HCT116 (cell line): ENCODE measurements at regions of chr6 and their contacts with region 1.

Region 1: DNA sequence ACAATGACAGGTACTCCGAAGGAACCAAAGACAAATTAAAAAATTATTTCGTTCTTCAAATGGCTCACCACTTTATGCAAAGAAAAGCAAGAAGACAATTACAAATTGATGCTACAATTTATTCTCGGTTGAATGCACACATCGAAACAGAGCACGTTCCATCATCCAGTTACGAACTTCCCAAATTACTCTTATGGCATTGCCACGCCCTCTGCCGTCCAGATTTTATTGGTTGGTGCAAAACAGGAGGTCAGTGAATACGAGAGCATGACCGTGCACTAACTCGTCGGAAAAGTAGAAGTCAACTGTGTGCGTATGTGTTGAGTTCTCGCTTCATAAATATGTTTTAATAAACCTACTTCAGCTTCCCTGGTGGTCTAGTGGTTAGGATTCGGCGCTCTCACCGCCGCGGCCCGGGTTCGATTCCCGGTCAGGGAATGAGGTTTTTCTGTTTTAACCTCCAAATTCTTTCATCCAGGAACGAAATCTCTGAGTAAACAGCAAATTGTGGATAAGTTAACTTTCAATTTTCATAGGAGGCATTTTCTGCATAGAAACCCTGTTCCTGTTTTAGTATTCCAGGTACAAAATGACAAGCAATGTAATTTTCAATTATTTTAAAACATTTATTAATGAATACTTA is 23.2 kb downstream of the ZNF311 start:
- DNase-seq: peak; percentile 91
- ATAC-seq: peak; percentile 35
- H3K4me3 ChIP-seq: peak overlapping the region; percentile 31 to 56
- H3K27ac ChIP-seq: peak overlapping the region; percentile 24; the same call in 1 of the 2 replicates
- H3K4me1 ChIP-seq: peaks cover 35 to 71% of the 10 kb centered on the region in 2 experiments
- H3K27me3 ChIP-seq: no peaks in the 10 kb centered on the region
- CTCF ChIP-seq: no peak
- POLR2A ChIP-seq: no peak
- RAD21 ChIP-seq: peak; percentile 45; the same call in 1 of the 2 replicates

Region 2: GRCh38 chr6:28725890-28726348 is 256.0 kb before region 1 on chr6:
- CTCF ChIA-PET with region 1: no interaction called
- POLR2A ChIA-PET with region 1: no interaction called
- RAD21 ChIA-PET with region 1: no interaction called
- intact Hi-C with region 1: loop called (anchors 5 kb)
- DNase-seq: no peak
- ATAC-seq: peak; percentile 71
- H3K4me3 ChIP-seq: peak overlapping the region; percentile 28 to 36
- H3K27ac ChIP-seq: no peak overlapping the region
- H3K4me1 ChIP-seq: peaks cover 15 to 31% of the 10 kb centered on the region in 2 experiments; a peak in 3 of 4 replicates
- H3K27me3 ChIP-seq: no peaks in the 10 kb centered on the region
- CTCF ChIP-seq: no peak
- POLR2A ChIP-seq: no peak
- RAD21 ChIP-seq: no peak

Region 3: DNA sequence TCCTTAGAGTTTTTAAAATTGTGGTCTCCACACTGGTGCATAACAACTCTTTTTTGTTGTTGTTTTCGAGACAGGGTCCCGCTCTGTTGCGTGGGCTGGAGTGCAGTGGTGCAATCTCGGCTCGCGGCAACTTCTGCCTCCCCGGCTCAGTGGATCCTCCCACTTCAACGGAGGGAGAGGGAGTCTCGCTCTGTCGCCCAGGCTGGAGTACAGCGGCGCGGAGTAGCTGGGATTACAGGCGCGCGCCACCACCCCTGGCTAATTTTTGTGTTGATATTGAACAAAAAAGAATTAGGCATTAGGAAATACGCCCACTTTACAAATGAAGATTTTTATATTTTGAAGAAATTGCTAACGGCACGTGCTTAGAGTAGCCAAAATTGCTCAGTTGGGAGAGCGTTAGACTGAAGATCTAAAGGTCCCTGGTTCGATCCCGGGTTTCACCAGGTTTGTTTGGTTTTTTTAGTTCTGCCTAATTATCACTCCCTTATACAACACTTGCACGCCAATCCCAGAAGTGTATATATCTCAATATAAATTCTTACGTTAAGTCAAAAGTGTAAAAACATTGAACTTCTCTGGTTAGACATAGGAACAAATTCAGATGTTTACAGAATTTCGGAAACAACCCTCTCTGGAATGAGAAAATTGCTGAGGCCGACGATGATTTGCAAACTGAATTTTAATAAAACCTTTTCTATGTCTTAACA is 217.8 kb before region 1 on chr6:
- CTCF ChIA-PET with region 1: no interaction called
- POLR2A ChIA-PET with region 1: no interaction called
- RAD21 ChIA-PET with region 1: no interaction called
- intact Hi-C with region 1: no loop called
- DNase-seq: no peak
- ATAC-seq: peak; percentile 30
- H3K4me3 ChIP-seq: no peak overlapping the region
- H3K27ac ChIP-seq: no peak overlapping the region
- H3K4me1 ChIP-seq: peaks cover 0 to 2% of the 10 kb centered on the region in 2 experiments; a peak in 2 of 4 replicates
- H3K27me3 ChIP-seq: no peaks in the 10 kb centered on the region
- CTCF ChIP-seq: no peak
- POLR2A ChIP-seq: no peak
- RAD21 ChIP-seq: no peak

Region 4: DNA sequence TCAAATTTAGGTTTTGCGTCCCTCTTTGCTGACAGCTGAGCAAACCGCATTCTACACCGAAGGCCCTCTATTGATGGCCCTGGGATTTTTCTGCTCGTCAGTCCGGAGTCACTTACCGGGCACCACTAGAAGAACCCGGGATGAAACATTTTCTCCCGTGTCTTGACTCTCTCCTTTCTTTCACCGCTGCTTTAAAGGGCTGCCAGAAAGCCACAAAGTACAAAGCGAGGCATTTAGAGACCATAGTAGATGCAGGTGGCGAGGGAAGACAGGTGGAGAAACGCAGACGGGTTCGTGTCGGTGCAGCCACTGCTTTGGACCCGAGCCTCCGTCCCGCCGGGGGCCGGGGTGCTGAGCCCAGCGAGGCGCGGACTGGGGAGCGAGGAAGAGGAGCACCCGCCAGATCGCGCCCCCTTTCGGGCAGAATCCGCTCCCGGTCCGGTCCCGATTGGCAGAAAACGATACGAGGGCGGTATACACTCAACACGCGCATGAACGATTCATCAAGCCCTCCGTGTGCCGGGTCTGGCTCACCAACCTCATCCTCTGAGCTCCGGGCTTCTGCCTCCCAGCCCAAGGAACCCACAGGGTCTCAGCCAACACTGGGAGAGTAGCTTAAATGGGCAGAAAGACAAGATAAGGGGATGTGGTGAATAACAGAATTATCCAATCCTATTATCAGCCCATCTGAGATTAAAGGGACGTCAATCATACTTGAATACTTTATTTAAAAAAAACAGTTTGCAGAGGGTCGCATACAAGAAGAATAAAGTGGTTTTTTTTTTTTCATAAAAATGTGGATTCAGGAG is 143.1 kb before region 1 on chr6:
- CTCF ChIA-PET with region 1: interaction called, 6 read pairs
- POLR2A ChIA-PET with region 1: interaction called, 3 read pairs
- RAD21 ChIA-PET with region 1: interaction called in 1 of 2 experiments, 3 read pairs
- intact Hi-C with region 1: loop called (anchors 2 kb)
- DNase-seq: peak; percentile 75
- ATAC-seq: peak; percentile 84
- H3K4me3 ChIP-seq: peak overlapping the region; percentile 55 to 67
- H3K27ac ChIP-seq: peak overlapping the region; percentile 67
- H3K4me1 ChIP-seq: peaks cover 3 to 19% of the 10 kb centered on the region in 2 experiments; a peak in 3 of 4 replicates
- H3K27me3 ChIP-seq: no peaks in the 10 kb centered on the region
- CTCF ChIP-seq: peak; percentile 46 to 67 (median 65); a peak in 5 of 6 replicates
- POLR2A ChIP-seq: peak; percentile 45
- RAD21 ChIP-seq: peak; percentile 55

Region 5: DNA sequence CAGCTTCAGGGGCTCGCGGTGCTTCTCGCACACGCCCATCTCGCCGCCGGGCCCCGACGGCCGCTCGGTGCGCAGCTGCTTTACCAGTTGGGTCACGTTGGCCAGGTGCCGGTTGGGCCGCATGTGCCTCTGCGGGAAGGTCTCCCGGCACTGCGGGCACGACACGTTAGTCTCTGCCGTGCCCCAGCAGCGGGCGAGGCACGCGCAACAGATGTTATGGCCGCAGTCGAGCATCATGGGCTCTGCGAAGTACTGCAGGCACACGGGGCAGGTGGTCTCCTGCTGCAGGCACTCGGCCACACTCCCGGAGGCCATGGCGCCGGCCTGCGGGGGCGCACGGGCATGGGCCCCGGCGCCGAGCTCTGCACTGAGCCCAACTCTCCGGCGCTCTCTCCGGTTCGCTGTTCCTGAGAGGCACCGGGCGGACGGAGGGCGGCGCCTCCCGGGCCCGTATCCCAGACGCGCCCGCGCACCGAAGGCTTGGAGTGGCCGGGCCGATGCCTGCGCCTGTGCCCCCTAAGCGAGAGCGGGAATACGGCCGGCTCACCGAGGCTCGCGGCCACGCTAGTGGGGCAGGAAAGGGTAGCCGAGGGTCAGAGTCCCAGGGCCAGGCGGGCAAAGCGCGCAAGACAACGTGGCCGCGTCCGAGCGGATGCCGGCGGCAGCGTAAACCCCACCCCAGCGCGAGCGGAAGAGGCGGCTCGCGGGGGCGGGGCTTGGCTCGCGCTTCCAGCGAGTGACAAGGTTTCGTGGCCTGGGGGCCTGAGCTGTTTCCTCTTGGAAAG is 58.4 kb before region 1 on chr6 and contains the start of gene TRIM27:
- CTCF ChIA-PET with region 1: no interaction called
- POLR2A ChIA-PET with region 1: interaction called, 11 read pairs
- RAD21 ChIA-PET with region 1: no interaction called
- intact Hi-C with region 1: no loop called
- DNase-seq: peak; percentile 57
- ATAC-seq: peak; percentile 89
- H3K4me3 ChIP-seq: peak within 1 kb of the TSS; percentile 95 to 99
- H3K27ac ChIP-seq: peak within 1 kb of the TSS; percentile 98
- H3K4me1 ChIP-seq: peaks cover 14 to 27% of the 10 kb centered on the region in 2 experiments
- H3K27me3 ChIP-seq: no peaks in the 10 kb centered on the region
- CTCF ChIP-seq: no peak
- POLR2A ChIP-seq: peak; percentile 90
- RAD21 ChIP-seq: 0 out of 2 replicates have a peak, but pooled peaks have one; percentile 9
- total RNA-seq, gene TRIM27: 62.5 TPM

Region 6: DNA sequence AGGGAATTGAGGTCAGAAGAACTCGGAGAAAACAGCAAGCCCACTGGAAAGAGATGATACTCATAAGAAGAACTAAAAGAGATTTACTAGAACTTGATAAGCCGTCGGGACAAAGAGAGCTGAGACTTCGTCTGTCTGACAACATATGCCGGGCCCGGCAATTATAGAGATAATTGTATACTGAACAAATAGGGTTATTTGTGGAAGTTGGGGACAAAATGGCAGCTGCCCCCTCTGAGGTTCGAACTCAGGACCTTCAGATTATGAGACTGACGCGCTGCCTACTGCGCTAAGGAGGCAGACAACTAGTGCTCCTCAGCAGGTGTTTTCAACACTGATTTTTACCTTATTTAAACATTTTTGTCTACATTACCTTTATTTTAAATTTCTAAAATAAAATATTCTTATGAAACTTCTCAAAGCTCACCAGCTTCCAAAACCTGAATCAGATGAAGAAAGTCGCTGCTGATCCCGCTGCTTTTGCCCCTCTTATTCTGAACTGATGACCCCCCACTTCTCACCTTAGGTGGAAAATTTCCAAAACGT is 28.8 kb before region 1 on chr6:
- CTCF ChIA-PET with region 1: interaction called, 3 read pairs
- POLR2A ChIA-PET with region 1: interaction called, 4 read pairs
- RAD21 ChIA-PET with region 1: no interaction called
- intact Hi-C with region 1: loop called (anchors 1 kb)
- DNase-seq: peak; percentile 36
- ATAC-seq: peak; percentile 46
- H3K4me3 ChIP-seq: no peak overlapping the region
- H3K27ac ChIP-seq: no peak overlapping the region
- H3K4me1 ChIP-seq: peaks cover 14 to 25% of the 10 kb centered on the region in 2 experiments; a peak in 3 of 4 replicates
- H3K27me3 ChIP-seq: no peaks in the 10 kb centered on the region
- CTCF ChIP-seq: no peak
- POLR2A ChIP-seq: no peak
- RAD21 ChIP-seq: no peak

Region 7: GRCh38 chr6:30212865-30213666 is 1231.1 kb after region 1 on chr6 and contains the start of gene TRIM26:
- CTCF ChIA-PET with region 1: no interaction called
- POLR2A ChIA-PET with region 1: no interaction called
- RAD21 ChIA-PET with region 1: no interaction called
- intact Hi-C with region 1: no loop called
- DNase-seq: peak; percentile 94
- ATAC-seq: peak; percentile 88
- H3K4me3 ChIP-seq: peak within 1 kb of the TSS; percentile 85 to 89
- H3K27ac ChIP-seq: peak within 1 kb of the TSS; percentile 77
- H3K4me1 ChIP-seq: peaks cover 0 to 26% of the 10 kb centered on the region in 2 experiments; a peak in 2 of 4 replicates
- H3K27me3 ChIP-seq: no peaks in the 10 kb centered on the region
- CTCF ChIP-seq: no peak
- POLR2A ChIP-seq: peak; percentile 72
- RAD21 ChIP-seq: no peak
- total RNA-seq, gene TRIM26: 32.2 TPM

Region 8: DNA sequence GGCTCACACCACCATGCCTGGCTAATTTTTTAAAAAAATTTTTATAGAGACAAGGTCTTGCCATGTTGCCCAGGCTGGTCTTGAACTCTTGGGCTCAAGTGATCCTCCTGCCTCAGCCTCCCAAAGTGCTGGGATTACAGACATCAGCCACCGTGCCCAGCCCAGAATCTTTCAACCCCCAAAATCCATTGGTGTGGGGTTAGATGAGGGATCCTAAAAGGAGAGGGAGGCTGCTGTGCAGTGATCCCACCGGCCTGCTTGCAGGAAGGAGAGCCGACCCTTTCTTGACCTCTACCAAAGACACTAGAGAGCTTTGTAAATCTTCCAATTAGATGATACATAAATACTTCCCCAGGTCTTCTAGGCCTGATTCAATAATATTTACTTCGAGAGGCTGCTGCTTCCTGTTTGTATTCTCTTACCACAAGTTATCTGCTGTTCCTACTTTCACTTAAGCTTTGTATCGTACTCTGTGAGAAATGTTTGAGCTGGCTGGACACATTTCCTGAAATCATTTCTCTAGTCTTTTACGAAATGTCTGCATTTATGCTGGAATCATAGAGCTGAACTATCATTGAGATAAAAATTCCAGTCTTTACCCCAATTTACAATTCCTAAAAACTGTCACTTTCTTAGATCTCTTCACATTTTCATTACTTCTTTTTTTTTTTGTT is 1811.7 kb after region 1 on chr6:
- CTCF ChIA-PET with region 1: no interaction called
- POLR2A ChIA-PET with region 1: no interaction called
- RAD21 ChIA-PET with region 1: no interaction called
- intact Hi-C with region 1: no loop called
- DNase-seq: no peak
- ATAC-seq: no peak
- H3K4me3 ChIP-seq: no peak overlapping the region
- H3K27ac ChIP-seq: no peak overlapping the region
- H3K4me1 ChIP-seq: peaks cover 11 to 33% of the 10 kb centered on the region in 2 experiments; a peak in 3 of 4 replicates
- H3K27me3 ChIP-seq: no peaks in the 10 kb centered on the region
- CTCF ChIP-seq: no peak
- POLR2A ChIP-seq: no peak
- RAD21 ChIP-seq: no peak